Caco-2 (cell line): ENCODE measurements at regions of chr7 and their contacts with region 1.

Region 1: DNA sequence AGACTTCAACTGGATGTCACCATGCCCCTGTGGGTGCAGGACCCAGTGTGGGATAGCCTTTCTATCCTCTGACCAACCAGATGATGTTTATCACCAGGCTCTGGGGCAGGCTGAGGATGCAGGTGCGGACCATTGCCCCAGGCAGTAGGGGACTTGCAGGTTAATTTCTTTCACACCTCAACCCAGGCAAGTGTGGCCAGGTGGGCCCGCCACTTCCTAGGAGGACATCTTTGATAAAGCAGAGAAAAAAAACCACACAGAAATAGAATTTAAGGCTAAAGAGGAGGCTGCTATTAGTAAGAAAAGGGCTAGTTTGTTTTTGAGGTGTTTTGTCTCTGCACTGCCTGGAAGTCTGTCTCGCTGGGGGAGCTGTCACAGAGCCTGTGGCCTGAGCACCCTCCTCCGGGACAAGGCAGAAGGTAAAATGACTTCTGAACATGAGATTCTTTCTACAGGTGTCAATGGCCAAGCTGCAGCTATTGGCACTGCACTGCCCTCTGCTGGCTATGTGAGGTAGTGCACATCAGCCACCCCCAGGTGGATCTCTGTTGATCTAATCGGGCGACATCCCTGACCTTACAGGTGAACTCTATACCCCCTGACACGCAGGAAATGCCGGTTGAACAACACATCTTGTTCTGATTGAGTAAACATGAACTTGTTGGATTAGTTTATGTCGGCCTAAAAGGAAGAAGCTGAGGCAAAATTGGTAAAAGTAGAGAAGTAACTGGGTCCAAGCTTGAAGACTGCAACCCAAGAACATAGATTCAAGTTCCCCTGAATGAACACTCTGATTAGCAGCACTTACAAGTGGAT is 21.0 kb downstream of the UPP1 start:
- DNase-seq: peak; percentile 82 to 88
- H3K4me3 ChIP-seq: no peak overlapping the region
- H3K4me3 Mint-ChIP-seq: no peak overlapping the region
- H3K27ac Mint-ChIP-seq: peak overlapping the region; percentile 13
- H3K4me1 ChIP-seq: peaks cover 9% of the 10 kb centered on the region
- H3K4me1 Mint-ChIP-seq: peaks cover 18% of the 10 kb centered on the region
- H3K27me3 ChIP-seq: no peaks in the 10 kb centered on the region
- H3K27me3 Mint-ChIP-seq: no peaks in the 10 kb centered on the region
- CTCF ChIP-seq: peak; percentile 97 to 98

Region 2: DNA sequence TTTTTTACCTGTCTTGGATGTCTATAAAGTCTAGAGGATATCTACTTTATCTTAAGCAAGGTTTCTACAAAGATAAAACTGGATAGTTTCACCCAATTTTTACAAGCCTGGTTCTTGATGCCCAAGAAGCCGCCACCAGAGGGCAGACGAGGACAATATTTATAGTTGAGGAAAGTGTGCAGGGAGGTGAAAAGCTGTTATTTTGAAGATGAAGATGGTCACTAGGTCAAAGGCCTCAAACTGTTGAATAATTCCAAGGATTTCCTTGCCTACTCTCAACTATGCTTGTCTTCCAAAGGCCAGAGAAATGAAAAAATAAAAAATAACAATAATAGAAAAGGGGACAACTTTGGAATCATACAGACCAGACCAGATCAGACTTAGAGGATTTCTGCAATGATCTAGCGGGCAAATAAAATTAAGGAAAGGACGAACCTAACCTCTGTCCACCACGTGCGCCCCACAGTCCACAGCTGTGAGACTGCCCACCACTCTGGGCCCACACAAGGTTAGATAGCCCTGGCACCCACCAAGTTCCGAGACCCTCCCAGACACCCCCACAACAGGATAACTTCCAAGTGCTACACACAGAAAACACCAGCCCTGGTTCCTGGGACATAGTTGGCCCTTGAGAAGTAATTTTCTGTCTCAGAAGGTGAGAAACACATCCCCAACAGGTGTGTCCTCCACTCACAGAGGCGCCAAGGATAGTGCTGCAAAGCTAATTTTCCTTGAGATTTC is 164.6 kb before region 1 on chr7:
- CTCF ChIA-PET with region 1: interaction called, 14 read pairs
- POLR2A ChIA-PET with region 1: no interaction called
- intact Hi-C with region 1: loop called (anchors 1 kb)
- DNase-seq: peak; percentile 67 to 78
- H3K4me3 ChIP-seq: no peak overlapping the region
- H3K4me3 Mint-ChIP-seq: no peak overlapping the region
- H3K27ac Mint-ChIP-seq: no peak overlapping the region
- H3K4me1 ChIP-seq: peaks cover 15% of the 10 kb centered on the region
- H3K4me1 Mint-ChIP-seq: peaks cover 30% of the 10 kb centered on the region
- H3K27me3 ChIP-seq: no peaks in the 10 kb centered on the region
- H3K27me3 Mint-ChIP-seq: no peaks in the 10 kb centered on the region
- CTCF ChIP-seq: peak; percentile 74 to 77

Region 3: DNA sequence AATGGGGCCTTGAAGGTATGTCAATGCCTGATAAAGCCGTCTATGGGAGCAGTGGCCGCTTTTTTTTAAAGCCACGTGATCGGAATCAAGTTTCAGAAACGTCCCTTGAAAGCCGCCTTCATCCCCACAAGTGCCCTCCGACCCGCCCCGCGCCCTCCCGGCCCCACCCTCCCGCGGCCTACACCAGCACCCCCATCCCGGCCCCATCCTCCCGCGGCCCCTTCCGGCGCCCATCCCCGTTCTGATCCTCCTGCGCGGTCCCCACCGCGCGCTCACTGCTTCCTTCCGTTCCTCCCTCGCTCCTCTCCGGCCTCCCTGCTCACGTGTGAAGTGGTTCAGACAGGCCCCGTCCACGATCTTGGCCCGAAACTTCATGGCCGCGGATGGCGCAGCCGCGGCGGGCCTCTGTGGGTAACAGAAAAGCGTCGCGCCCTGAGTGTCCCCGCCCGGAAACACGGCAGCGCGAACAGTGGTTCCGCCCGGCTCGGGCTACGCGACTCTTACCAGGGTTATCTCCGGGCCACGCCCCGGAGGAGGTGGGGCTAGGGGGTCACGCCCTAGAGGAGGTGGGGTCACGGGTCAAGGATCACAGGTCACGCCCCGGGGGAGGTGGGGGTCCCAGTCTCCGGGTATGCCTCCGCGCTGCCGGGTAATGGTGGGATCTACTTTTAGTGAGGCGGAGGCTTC is 130.8 kb before region 1 on chr7 and contains the start of gene HUS1:
- CTCF ChIA-PET with region 1: interaction called, 5 read pairs
- POLR2A ChIA-PET with region 1: no interaction called
- intact Hi-C with region 1: loop called (anchors 1 kb)
- DNase-seq: peak; percentile 93 to 94
- H3K4me3 ChIP-seq: peak within 1 kb of the TSS; percentile 87
- H3K4me3 Mint-ChIP-seq: peak within 1 kb of the TSS; percentile 81
- H3K27ac Mint-ChIP-seq: peak within 1 kb of the TSS; percentile 90
- H3K4me1 ChIP-seq: peaks cover 5% of the 10 kb centered on the region
- H3K4me1 Mint-ChIP-seq: peaks cover 18% of the 10 kb centered on the region
- H3K27me3 ChIP-seq: no peaks in the 10 kb centered on the region
- H3K27me3 Mint-ChIP-seq: no peaks in the 10 kb centered on the region
- CTCF ChIP-seq: no peak
- total RNA-seq, gene HUS1: 31.3 and 32.3 TPM in 2 replicates

Region 4: DNA sequence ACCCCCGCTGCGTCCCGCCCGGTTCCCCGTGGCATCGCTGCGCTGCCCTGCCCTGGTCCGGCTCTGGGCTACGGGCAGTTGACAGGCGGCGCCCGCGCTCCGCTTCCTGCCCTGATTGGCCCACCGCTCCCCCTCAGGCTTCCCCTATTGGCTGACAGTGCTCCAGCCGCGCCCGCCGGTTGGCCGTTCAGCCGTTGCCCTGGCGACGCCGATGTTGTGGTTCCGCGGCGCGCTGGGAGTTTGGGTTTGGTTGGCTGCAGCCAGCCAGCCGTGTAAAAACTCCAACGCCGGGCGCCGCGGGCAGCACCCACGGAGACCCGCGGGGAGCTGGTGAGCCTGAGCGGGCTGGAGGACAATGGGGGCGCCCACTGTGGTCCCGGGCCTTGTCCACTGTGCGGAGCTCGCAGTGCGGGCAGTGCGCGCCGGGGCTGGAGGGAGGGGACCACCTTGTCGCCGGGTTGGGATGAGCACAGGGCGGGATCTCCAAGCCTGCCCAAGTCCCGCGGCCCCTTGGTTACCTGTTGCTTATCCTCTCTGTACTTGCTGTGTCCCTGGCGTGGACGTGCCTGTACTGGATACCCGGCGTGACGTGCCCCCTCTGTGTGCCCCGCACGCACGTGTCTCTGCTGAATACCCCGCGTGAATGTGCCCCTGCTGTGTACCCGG is 74.6 kb before region 1 on chr7 and contains the start of gene C7orf57:
- CTCF ChIA-PET with region 1: interaction called, 3 read pairs
- POLR2A ChIA-PET with region 1: no interaction called
- intact Hi-C with region 1: loop called (anchors 1 kb)
- DNase-seq: peak; percentile 91 to 94
- H3K4me3 ChIP-seq: peak within 1 kb of the TSS; percentile 50
- H3K4me3 Mint-ChIP-seq: peak within 1 kb of the TSS; percentile 78
- H3K27ac Mint-ChIP-seq: peak within 1 kb of the TSS; percentile 84
- H3K4me1 ChIP-seq: peaks cover 5% of the 10 kb centered on the region
- H3K4me1 Mint-ChIP-seq: peaks cover 7% of the 10 kb centered on the region
- H3K27me3 ChIP-seq: peaks cover 5% of the 10 kb centered on the region
- H3K27me3 Mint-ChIP-seq: peaks cover 37% of the 10 kb centered on the region
- CTCF ChIP-seq: peak in 1 of 2 experiments; percentile 36
- total RNA-seq, gene C7orf57: not detected in 2 replicates

Region 5: GRCh38 chr7:48058990-48059389 is 51.1 kb before region 1 on chr7:
- CTCF ChIA-PET with region 1: no interaction called
- POLR2A ChIA-PET with region 1: no interaction called
- intact Hi-C with region 1: no loop called
- DNase-seq: no peak
- H3K4me3 ChIP-seq: no peak overlapping the region
- H3K4me3 Mint-ChIP-seq: no peak overlapping the region
- H3K27ac Mint-ChIP-seq: no peak overlapping the region
- H3K4me1 ChIP-seq: peaks cover under 1% of the 10 kb centered on the region; the same call in 1 of the 2 replicates
- H3K4me1 Mint-ChIP-seq: no peaks in the 10 kb centered on the region
- H3K27me3 ChIP-seq: no peaks in the 10 kb centered on the region
- H3K27me3 Mint-ChIP-seq: peaks cover 5% of the 10 kb centered on the region
- CTCF ChIP-seq: no peak

Region 6: DNA sequence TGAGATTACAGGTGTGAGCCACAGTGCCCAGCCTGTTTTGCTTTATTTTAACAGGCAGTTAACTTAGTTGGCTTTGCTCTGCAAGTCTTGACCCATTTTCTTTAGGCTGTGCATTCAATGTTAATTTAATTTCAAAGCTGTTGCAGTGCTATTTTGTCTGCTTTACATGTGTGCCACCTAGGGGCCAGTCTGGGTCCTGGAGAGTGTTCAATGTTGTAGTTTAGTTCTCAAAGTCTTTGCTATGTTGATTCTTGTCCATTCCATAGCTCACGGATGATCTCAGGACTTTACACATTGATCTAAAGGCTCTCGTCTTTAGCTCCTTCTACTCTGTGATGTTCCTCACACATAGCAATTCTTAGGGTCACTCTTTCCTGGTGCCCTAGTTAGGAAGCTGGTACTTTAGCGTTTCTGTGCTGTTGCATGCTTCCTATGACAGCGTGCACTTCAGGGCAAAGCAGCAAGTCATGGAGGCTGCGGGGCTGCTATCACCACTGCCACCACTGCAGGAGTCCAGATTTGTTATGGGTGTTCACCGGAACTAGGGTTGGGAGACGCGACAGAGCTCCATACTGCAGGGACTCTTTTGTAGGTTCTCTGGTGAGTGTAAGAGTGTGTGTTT is 44.8 kb after region 1 on chr7:
- CTCF ChIA-PET with region 1: interaction called, 19 read pairs
- POLR2A ChIA-PET with region 1: no interaction called
- intact Hi-C with region 1: loop called (anchors 1 kb)
- DNase-seq: peak; percentile 48 to 70
- H3K4me3 ChIP-seq: no peak overlapping the region
- H3K4me3 Mint-ChIP-seq: no peak overlapping the region
- H3K27ac Mint-ChIP-seq: no peak overlapping the region
- H3K4me1 ChIP-seq: no peaks in the 10 kb centered on the region
- H3K4me1 Mint-ChIP-seq: peaks cover 6% of the 10 kb centered on the region
- H3K27me3 ChIP-seq: no peaks in the 10 kb centered on the region
- H3K27me3 Mint-ChIP-seq: peaks cover 17% of the 10 kb centered on the region
- CTCF ChIP-seq: peak; percentile 68 to 81